ENCODE measurements at regions of chr3 and their contacts with region 1.

Region 1: GRCh38 chr3:48548729-48549705 is 7.6 kb downstream of the PFKFB4 start:
- DNase-seq: peak; percentile 94
- H3K4me3 ChIP-seq: no peak overlapping the region
- H3K27ac ChIP-seq: peak overlapping the region in 3 of 8 donors; percentile 8 to 52 (median 38)
- H3K4me1 ChIP-seq: peaks cover 0 to 55% (median 11%) of the 10 kb centered on the region in 6 donors
- H3K27me3 ChIP-seq: no peaks in the 10 kb centered on the region
- CTCF ChIP-seq: peak; percentile 88 to 97 (median 96)
- POLR2A ChIP-seq: no peak

Region 2: GRCh38 chr3:48400824-48401433 is 148.1 kb before region 1 on chr3:
- intact Hi-C with region 1: loop called (anchors 2 kb)
- DNase-seq: peak; percentile 77
- H3K4me3 ChIP-seq: no peak overlapping the region
- H3K27ac ChIP-seq: no peak overlapping the region
- H3K4me1 ChIP-seq: peaks cover 0 to 55% (median 19%) of the 10 kb centered on the region in 6 donors
- H3K27me3 ChIP-seq: no peaks in the 10 kb centered on the region
- CTCF ChIP-seq: peak; percentile 81 to 93 (median 89)
- POLR2A ChIP-seq: no peak

Region 3: GRCh38 chr3:48464713-48465221 is 84.2 kb before region 1 on chr3:
- intact Hi-C with region 1: loop called (anchors 5 kb)
- DNase-seq: peak; percentile 81
- H3K4me3 ChIP-seq: peak overlapping the region in 1 of 8 donors; percentile 92
- H3K27ac ChIP-seq: peak overlapping the region in 7 of 8 donors; percentile 92 to 99 (median 97)
- H3K4me1 ChIP-seq: peaks cover 37 to 57% (median 50%) of the 10 kb centered on the region in 6 donors
- H3K27me3 ChIP-seq: no peaks in the 10 kb centered on the region
- CTCF ChIP-seq: no peak
- POLR2A ChIP-seq: no peak

Region 4: GRCh38 chr3:48678056-48678455 is 129.0 kb after region 1 on chr3:
- intact Hi-C with region 1: no loop called
- DNase-seq: no peak
- H3K4me3 ChIP-seq: no peak overlapping the region
- H3K27ac ChIP-seq: no peak overlapping the region
- H3K4me1 ChIP-seq: peaks cover under 1 to 16% (median 10%) of the 10 kb centered on the region in 6 donors
- H3K27me3 ChIP-seq: no peaks in the 10 kb centered on the region
- CTCF ChIP-seq: no peak
- POLR2A ChIP-seq: no peak

Region 5: DNA sequence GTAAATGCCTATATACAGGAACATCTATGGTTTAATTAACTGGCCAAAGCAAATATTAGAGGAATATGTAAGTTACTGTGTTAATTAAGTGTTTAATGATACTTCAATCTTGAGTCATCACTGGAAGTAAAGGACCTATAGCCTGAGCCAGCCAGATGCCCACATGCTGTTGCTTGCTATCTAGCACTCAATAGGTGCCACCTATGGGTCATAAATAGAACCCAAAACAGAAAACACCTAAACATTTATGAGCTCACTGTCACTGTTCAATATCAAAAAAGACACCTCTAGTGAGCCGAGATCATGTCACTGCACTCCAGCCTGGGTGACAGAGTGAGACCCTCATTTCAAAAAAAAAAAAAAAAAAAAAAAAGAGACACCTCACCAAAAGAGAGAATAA is 216.4 kb after region 1 on chr3:
- intact Hi-C with region 1: no loop called
- DNase-seq: no peak
- H3K4me3 ChIP-seq: no peak overlapping the region
- H3K27ac ChIP-seq: no peak overlapping the region
- H3K4me1 ChIP-seq: peaks cover 0 to 13% (median 2%) of the 10 kb centered on the region in 6 donors
- H3K27me3 ChIP-seq: no peaks in the 10 kb centered on the region
- CTCF ChIP-seq: no peak
- POLR2A ChIP-seq: no peak